ENCODE measurements at regions of chr2 and their contacts with region 1.

Region 1: DNA sequence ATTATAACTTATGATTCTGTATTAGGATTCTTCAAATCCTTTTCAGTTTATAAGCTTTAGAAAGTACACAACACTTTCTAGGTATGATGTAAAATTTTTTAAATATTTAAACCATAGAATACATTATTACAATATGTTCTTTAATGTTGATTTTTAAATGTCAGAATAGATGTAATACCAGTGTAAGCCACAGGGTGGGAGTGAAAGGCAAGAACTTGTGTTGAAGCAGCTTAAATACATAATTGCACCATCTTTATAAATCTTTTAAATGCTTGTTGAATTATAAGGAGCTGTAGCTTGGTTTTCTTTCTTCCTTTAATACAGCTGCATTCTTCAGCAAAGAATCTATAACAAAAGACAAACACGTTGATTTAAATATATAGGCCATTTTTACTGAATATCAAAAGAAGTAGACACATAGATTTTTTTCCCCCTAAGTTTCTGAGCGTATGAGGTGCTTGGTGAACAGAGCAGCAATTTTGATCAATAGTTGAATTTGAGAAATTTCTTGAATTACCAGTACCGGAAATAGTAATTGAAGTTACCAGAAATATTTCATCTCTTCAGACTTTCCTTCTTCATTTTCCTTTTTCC is 63.0 kb downstream of the TANK start:
- DNase-seq: no peak
- H3K4me3 ChIP-seq: no peak overlapping the region
- H3K27ac ChIP-seq: no peak overlapping the region
- H3K27me3 ChIP-seq: no peaks in the 10 kb centered on the region
- CTCF ChIP-seq: peak; percentile 70

Region 2: DNA sequence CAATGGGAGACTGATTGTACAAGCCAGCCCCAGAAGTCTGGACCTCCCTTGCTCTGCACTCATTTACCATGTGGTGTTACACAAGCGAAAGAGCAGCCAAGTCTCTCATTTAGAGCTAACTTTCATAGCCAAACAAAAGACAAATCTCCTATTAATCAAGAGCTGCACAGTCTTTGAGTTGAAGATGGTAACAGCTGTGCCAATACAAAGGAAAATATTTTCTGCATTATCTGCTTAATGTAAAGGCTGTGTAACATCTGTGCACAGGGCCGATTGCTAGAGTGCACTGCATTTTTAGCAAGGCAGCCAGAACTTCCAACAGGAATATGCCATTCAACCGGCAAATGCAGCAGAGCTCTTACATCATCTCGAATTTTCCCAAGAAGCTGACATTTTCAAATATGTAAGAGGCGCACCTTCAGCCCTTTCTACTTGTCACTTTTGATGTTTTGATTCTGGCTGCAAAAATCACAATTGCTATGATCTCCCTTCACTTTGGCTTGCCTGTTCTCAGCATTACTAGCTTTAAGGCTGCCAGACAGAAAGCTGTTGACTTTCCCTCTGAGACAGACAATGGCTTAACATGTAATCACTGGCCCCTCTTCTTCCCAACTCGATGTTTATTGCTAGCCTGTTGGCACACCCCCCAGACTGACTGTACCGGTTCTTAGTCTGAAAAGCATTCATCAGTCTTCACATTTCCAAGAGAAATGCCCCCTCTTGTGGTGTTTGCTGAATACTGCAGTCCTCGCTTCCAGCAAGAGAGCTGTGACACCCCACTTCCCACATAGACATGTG is 159.9 kb before region 1 on chr2:
- CTCF ChIA-PET with region 1: no interaction called
- POLR2A ChIA-PET with region 1: no interaction called
- DNase-seq: peak; percentile 67
- H3K4me3 ChIP-seq: no peak overlapping the region; the same call in 1 of the 2 replicates
- H3K27ac ChIP-seq: no peak overlapping the region
- H3K27me3 ChIP-seq: no peaks in the 10 kb centered on the region
- CTCF ChIP-seq: peak; percentile 95

Region 3: DNA sequence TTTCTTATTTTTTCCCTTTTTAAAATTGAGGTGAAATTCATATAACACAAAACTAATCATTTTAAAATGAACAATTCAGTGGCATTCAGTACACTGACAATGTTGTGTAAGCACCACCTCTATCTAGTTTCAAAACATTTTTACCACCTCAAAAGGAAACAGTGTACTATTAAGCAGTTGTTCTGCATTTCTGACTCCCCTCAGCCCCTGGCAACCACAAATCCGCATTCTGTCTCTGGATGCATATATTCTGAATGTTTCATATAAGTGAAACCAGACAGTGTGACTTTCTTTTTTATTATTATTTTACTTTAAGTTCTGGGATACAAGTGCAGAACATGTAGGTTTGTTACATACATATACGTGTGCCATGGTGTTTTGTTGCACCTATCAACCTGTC is 82.2 kb before region 1 on chr2:
- CTCF ChIA-PET with region 1: no interaction called
- POLR2A ChIA-PET with region 1: no interaction called
- DNase-seq: no peak
- H3K4me3 ChIP-seq: no peak overlapping the region
- H3K27ac ChIP-seq: no peak overlapping the region
- H3K27me3 ChIP-seq: no peaks in the 10 kb centered on the region
- CTCF ChIP-seq: no peak

Region 4: DNA sequence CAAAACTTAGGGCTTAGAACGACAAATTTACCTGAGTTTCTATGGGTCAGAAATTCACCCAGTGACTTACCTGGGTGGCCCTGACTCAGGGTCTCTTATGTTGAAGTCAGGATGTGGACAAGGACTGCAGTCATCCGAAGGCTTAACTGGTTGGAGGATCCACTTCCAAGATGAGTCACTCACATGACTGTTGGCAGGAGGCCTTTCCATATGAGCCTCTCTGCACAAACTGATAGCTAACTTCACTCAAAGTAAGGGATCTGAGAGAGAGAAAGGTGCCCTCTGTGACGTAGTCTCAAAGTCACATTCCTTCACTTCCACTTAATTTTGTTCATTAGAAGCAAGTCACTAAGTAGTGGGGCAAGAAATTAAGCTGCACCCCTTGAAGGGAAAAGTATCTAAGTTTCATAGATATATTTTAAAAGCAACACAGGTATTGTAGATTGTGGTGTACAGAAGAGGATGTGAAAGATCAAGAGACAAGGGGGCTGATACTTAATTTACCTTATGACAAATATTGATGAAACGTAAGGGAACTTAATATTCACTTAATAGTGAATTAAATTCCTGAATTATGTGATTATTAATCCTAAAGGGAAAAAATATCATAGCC is 14.6 kb before region 1 on chr2:
- CTCF ChIA-PET with region 1: interaction called, 18 read pairs
- POLR2A ChIA-PET with region 1: no interaction called
- DNase-seq: peak; percentile 38
- H3K4me3 ChIP-seq: no peak overlapping the region
- H3K27ac ChIP-seq: no peak overlapping the region
- H3K27me3 ChIP-seq: no peaks in the 10 kb centered on the region
- CTCF ChIP-seq: no peak

Region 5: DNA sequence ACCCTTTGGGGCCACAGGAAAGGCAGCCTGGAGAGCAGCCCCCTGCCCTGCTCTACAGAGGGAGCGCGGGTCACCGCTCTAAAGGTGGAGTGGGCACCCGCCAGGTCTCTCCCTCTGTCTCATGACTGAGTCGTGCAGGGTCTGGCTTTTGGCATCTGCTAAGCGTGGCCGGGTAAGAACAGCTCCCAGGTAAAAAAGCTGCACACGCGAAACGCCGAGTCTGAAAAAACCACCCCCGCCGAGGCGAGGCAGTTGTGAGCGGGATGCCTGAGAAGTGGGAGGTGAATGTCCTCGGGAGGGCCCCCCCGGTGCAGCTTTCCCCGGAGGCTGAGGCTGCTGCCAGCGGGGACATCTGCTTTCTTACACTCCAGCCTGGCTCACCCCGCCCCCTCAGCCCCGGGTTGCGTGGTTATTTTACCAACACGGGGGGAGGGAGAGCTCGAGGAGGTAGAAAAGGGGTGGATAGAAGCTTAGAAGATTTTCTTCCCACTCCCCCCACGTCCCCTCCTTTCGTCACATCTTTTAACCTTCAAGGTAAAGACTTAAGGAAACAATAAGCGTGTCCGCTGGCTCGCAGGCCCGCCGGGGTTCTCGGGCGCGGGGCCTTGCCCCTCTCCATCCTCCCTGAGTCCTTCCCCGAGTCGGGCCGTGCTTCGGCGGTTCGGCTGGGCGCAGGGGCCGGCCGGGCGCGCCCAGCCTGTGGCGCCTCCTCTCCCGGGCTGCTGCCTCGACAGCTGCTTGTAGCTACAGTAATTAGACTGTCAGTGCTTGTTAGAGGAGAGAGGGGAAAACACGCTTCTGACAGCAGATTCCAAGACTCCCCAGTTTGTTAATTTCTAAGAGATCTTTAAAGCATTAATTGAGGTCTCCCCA is 14.4 kb after region 1 on chr2:
- CTCF ChIA-PET with region 1: interaction called, 16 read pairs
- POLR2A ChIA-PET with region 1: no interaction called
- DNase-seq: no peak
- H3K4me3 ChIP-seq: peak overlapping the region; percentile 69
- H3K27ac ChIP-seq: no peak overlapping the region
- H3K27me3 ChIP-seq: no peaks in the 10 kb centered on the region
- CTCF ChIP-seq: no peak

Region 6: DNA sequence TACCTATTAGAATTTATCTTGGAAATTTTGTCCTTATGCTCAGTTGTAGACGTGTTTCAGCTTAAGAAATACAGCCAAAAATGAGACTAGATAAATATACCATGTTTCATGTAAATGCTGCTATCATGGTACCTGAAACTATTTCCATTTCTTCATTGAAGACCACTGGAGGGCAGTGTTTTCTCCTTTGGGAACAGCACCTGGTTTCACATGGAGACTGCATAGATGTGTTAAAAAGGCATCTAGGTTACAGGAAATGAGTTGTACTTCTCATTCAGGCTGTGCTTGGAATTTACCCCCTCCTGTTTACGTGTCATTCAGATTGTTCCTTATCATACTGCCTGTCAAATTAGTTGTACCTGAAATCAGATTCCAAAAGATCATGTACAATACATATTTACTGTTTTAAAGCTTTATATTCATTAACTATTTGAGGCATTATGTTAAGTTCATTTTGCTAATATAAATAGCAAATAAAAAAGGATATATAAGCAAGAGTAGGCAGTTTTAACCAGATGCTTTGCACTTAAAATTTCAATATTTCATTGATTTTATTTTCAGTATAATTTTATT is 27.7 kb after region 1 on chr2:
- CTCF ChIA-PET with region 1: interaction called, 19 read pairs
- POLR2A ChIA-PET with region 1: no interaction called
- DNase-seq: no peak
- H3K4me3 ChIP-seq: no peak overlapping the region
- H3K27ac ChIP-seq: no peak overlapping the region
- H3K27me3 ChIP-seq: peaks cover 20% of the 10 kb centered on the region
- CTCF ChIP-seq: peak; percentile 73

Region 7: GRCh38 chr2:161265874-161266273 is 42.6 kb after region 1 on chr2:
- CTCF ChIA-PET with region 1: interaction called, 24 read pairs
- POLR2A ChIA-PET with region 1: no interaction called
- DNase-seq: no peak
- H3K4me3 ChIP-seq: no peak overlapping the region
- H3K27ac ChIP-seq: no peak overlapping the region
- H3K27me3 ChIP-seq: peaks cover 2% of the 10 kb centered on the region
- CTCF ChIP-seq: no peak

Region 8: GRCh38 chr2:161273038-161273760 is 50.0 kb after region 1 on chr2:
- CTCF ChIA-PET with region 1: interaction called, 64 read pairs
- POLR2A ChIA-PET with region 1: no interaction called
- DNase-seq: peak; percentile 34
- H3K4me3 ChIP-seq: no peak overlapping the region
- H3K27ac ChIP-seq: no peak overlapping the region
- H3K27me3 ChIP-seq: no peaks in the 10 kb centered on the region
- CTCF ChIP-seq: peak; percentile 66